Naive thymus-derived CD4-positive, alpha-beta T cell (primary cell): ENCODE measurements at regions of chr11 and their contacts with region 1.

Region 1: GRCh38 chr11:133082851-133083488 is 449.3 kb downstream of the OPCML start:
- DNase-seq: peak in 8 of 9 donors; percentile 5 to 83 (median 24)
- ATAC-seq: peak; percentile 81
- H3K4me3 ChIP-seq: no peak overlapping the region
- H3K4me3 Mint-ChIP-seq: peak overlapping the region in 2 of 10 donors; percentile 15 to 47
- H3K27ac ChIP-seq: no peak overlapping the region
- H3K27ac Mint-ChIP-seq: no peak overlapping the region
- H3K4me1 ChIP-seq: no peaks in the 10 kb centered on the region
- H3K4me1 Mint-ChIP-seq: peaks cover 0 to 15% (median 3%) of the 10 kb centered on the region in 7 donors
- H3K27me3 ChIP-seq: no peaks in the 10 kb centered on the region
- H3K27me3 Mint-ChIP-seq: peaks cover 27 to 61% (median 42%) of the 10 kb centered on the region in 5 donors

Region 2: DNA sequence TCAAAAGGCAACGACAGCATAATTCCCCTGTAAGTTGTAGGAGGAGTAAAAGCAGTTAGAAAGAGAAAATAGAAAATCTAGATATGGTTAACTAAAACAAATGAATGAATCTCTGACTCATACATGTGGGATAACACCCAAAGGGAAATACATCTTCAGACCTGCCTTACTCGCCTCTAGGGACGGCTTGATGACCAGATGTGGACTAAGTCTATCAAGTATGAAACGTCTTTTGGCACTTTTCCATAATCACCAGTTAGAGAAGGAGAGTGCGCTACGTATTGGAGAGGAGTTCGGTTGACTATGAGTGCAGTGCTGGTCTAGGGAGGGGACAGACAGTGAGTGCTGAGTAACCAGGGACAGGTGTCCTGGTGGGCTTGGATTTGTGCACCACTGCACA is 10.6 kb before region 1 on chr11:
- CTCF ChIA-PET with region 1: no interaction called
- POLR2A ChIA-PET with region 1: no interaction called
- intact Hi-C with region 1: no loop called
- DNase-seq: no peak
- ATAC-seq: no peak
- H3K4me3 ChIP-seq: no peak overlapping the region
- H3K4me3 Mint-ChIP-seq: no peak overlapping the region
- H3K27ac ChIP-seq: no peak overlapping the region
- H3K27ac Mint-ChIP-seq: no peak overlapping the region
- H3K4me1 ChIP-seq: no peaks in the 10 kb centered on the region
- H3K4me1 Mint-ChIP-seq: no peaks in the 10 kb centered on the region
- H3K27me3 ChIP-seq: no peaks in the 10 kb centered on the region
- H3K27me3 Mint-ChIP-seq: peaks cover 0 to 24% (median 7%) of the 10 kb centered on the region in 5 donors

Region 3: GRCh38 chr11:133163463-133164419 is 80.8 kb after region 1 on chr11:
- CTCF ChIA-PET with region 1: no interaction called
- POLR2A ChIA-PET with region 1: no interaction called
- intact Hi-C with region 1: loop called in 1 of 2 experiments (anchors 2 kb)
- DNase-seq: no peak
- ATAC-seq: no peak
- H3K4me3 ChIP-seq: no peak overlapping the region
- H3K4me3 Mint-ChIP-seq: no peak overlapping the region
- H3K27ac ChIP-seq: no peak overlapping the region
- H3K27ac Mint-ChIP-seq: no peak overlapping the region
- H3K4me1 ChIP-seq: no peaks in the 10 kb centered on the region
- H3K4me1 Mint-ChIP-seq: no peaks in the 10 kb centered on the region
- H3K27me3 ChIP-seq: no peaks in the 10 kb centered on the region
- H3K27me3 Mint-ChIP-seq: peaks cover 0 to 18% (median 8%) of the 10 kb centered on the region in 5 donors

Region 4: GRCh38 chr11:133834682-133835592 is 752.0 kb after region 1 on chr11:
- CTCF ChIA-PET with region 1: no interaction called
- POLR2A ChIA-PET with region 1: no interaction called
- intact Hi-C with region 1: loop called in 1 of 2 experiments (anchors 1 kb)
- DNase-seq: peak in 5 of 9 donors; percentile 15 to 60 (median 26)
- ATAC-seq: no peak
- H3K4me3 ChIP-seq: no peak overlapping the region
- H3K4me3 Mint-ChIP-seq: no peak overlapping the region
- H3K27ac ChIP-seq: no peak overlapping the region
- H3K27ac Mint-ChIP-seq: peak overlapping the region in 1 of 9 donors; percentile 28
- H3K4me1 ChIP-seq: no peaks in the 10 kb centered on the region
- H3K4me1 Mint-ChIP-seq: peaks cover 3 to 14% (median 5%) of the 10 kb centered on the region in 7 donors
- H3K27me3 ChIP-seq: no peaks in the 10 kb centered on the region
- H3K27me3 Mint-ChIP-seq: peaks cover 0 to 66% (median 6%) of the 10 kb centered on the region in 5 donors